ENCODE measurements at regions of chr5 and their contacts with region 1.

Region 1: GRCh38 chr5:72816311-72817145 is at the start of gene TNPO1:
- DNase-seq: peak; percentile 95
- H3K4me3 Mint-ChIP-seq: peak within 1 kb of the TSS; percentile 97
- H3K27ac Mint-ChIP-seq: peak within 1 kb of the TSS; percentile 81
- H3K4me1 Mint-ChIP-seq: peaks cover 24% of the 10 kb centered on the region
- H3K27me3 Mint-ChIP-seq: no peaks in the 10 kb centered on the region
- CTCF ChIP-seq: no peak
- total RNA-seq, gene TNPO1: 138 TPM in 2 replicates

Region 2: GRCh38 chr5:72366324-72366976 is 450.1 kb before region 1 on chr5:
- CTCF ChIA-PET with region 1: interaction called, 10 read pairs
- intact Hi-C with region 1: loop called (anchors 5 kb)
- DNase-seq: peak; percentile 67
- H3K4me3 Mint-ChIP-seq: no peak overlapping the region
- H3K27ac Mint-ChIP-seq: no peak overlapping the region
- H3K4me1 Mint-ChIP-seq: peaks cover 9% of the 10 kb centered on the region
- H3K27me3 Mint-ChIP-seq: no peaks in the 10 kb centered on the region
- CTCF ChIP-seq: no peak

Region 3: GRCh38 chr5:72394688-72395087 is 421.8 kb before region 1 on chr5:
- CTCF ChIA-PET with region 1: no interaction called
- intact Hi-C with region 1: loop called (anchors 10 kb)
- DNase-seq: peak; percentile 15
- H3K4me3 Mint-ChIP-seq: no peak overlapping the region
- H3K27ac Mint-ChIP-seq: no peak overlapping the region
- H3K4me1 Mint-ChIP-seq: no peaks in the 10 kb centered on the region
- H3K27me3 Mint-ChIP-seq: peaks cover 20% of the 10 kb centered on the region
- CTCF ChIP-seq: peak; percentile 15

Region 4: GRCh38 chr5:72611118-72611730 is 205.3 kb before region 1 on chr5:
- CTCF ChIA-PET with region 1: interaction called, 44 read pairs
- intact Hi-C with region 1: loop called (anchors 2 kb)
- DNase-seq: peak; percentile 74
- H3K4me3 Mint-ChIP-seq: no peak overlapping the region
- H3K27ac Mint-ChIP-seq: no peak overlapping the region
- H3K4me1 Mint-ChIP-seq: no peaks in the 10 kb centered on the region
- H3K27me3 Mint-ChIP-seq: peaks cover 17% of the 10 kb centered on the region
- CTCF ChIP-seq: peak; percentile 91

Region 5: DNA sequence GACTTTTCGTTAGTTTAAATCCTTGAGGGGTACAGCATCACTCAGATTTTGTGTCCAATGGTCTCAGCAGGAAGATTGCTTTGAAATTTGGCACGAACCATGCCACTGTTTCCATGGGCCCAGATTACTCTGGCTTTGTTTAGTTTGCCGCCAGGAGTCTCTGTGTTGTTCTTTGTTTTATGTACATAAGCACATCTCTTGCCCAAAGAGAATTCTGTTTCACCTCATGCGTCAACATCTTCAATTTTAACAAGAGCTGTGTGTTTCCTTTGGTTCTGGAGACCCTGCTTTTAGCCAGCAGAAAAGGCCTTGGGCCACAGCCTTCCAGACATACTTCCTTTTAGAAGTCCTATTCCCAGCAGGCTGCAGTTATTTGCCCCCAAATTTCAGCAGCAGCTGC is 62.3 kb after region 1 on chr5:
- CTCF ChIA-PET with region 1: no interaction called
- intact Hi-C with region 1: no loop called
- DNase-seq: no peak
- H3K4me3 Mint-ChIP-seq: no peak overlapping the region
- H3K27ac Mint-ChIP-seq: no peak overlapping the region
- H3K4me1 Mint-ChIP-seq: no peaks in the 10 kb centered on the region
- H3K27me3 Mint-ChIP-seq: no peaks in the 10 kb centered on the region
- CTCF ChIP-seq: no peak

Measured in Calu3 (cell line).